ENCODE measurements at regions of chr2 and their contacts with region 1.

Region 1: GRCh38 chr2:197710424-197711042 is 5.4 kb downstream of the MARS2 start:
- DNase-seq: no peak
- H3K4me3 ChIP-seq: no peak overlapping the region
- H3K27ac ChIP-seq: no peak overlapping the region
- H3K4me1 ChIP-seq: peaks cover 21 to 48% (median 25%) of the 10 kb centered on the region in 3 donors
- H3K27me3 ChIP-seq: no peaks in the 10 kb centered on the region
- CTCF ChIP-seq: no peak
- POLR2A ChIP-seq: no peak

Region 2: GRCh38 chr2:197306696-197307040 is 403.9 kb before region 1 on chr2:
- intact Hi-C with region 1: no loop called
- DNase-seq: no peak
- H3K4me3 ChIP-seq: no peak overlapping the region
- H3K27ac ChIP-seq: peak overlapping the region in 3 of 4 donors; percentile 53 to 89 (median 68)
- H3K4me1 ChIP-seq: peaks cover 0 to 71% (median 13%) of the 10 kb centered on the region in 3 donors
- H3K27me3 ChIP-seq: no peaks in the 10 kb centered on the region
- CTCF ChIP-seq: no peak
- POLR2A ChIP-seq: peak in 1 of 4 donors; percentile 8

Region 3: DNA sequence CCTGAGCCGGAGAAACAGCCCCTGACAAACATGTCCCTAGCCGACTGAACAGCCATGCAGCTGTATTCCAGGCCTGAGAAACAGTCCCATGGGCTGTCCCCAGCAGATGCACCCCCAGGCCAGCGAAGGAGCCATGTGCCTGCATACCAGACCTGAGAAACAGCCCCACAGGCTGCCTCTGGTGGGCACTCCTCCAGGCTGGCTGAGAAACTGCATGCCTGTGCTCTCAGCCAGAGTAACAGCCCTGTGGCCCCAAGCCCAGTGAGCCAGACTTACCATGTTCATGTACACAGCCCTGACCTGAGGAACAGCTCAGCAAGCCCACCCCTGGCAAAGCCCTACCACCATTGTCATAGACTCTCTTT is 49.7 kb after region 1 on chr2:
- intact Hi-C with region 1: loop called (anchors 10 kb)
- DNase-seq: no peak
- H3K4me3 ChIP-seq: no peak overlapping the region
- H3K27ac ChIP-seq: no peak overlapping the region
- H3K4me1 ChIP-seq: no peaks in the 10 kb centered on the region
- H3K27me3 ChIP-seq: no peaks in the 10 kb centered on the region
- CTCF ChIP-seq: no peak
- POLR2A ChIP-seq: no peak

Region 4: GRCh38 chr2:197799068-197799467 is 88.5 kb after region 1 on chr2:
- intact Hi-C with region 1: no loop called
- DNase-seq: no peak
- H3K4me3 ChIP-seq: no peak overlapping the region
- H3K27ac ChIP-seq: no peak overlapping the region
- H3K4me1 ChIP-seq: peaks cover 9 to 11% (median 9%) of the 10 kb centered on the region in 3 donors
- H3K27me3 ChIP-seq: peaks cover 0 to 13% (median 0%) of the 10 kb centered on the region in 4 donors
- CTCF ChIP-seq: no peak
- POLR2A ChIP-seq: no peak

Region 5: GRCh38 chr2:198173242-198173641 is 462.7 kb after region 1 on chr2:
- intact Hi-C with region 1: no loop called
- DNase-seq: no peak
- H3K4me3 ChIP-seq: no peak overlapping the region
- H3K27ac ChIP-seq: no peak overlapping the region
- H3K4me1 ChIP-seq: no peaks in the 10 kb centered on the region
- H3K27me3 ChIP-seq: no peaks in the 10 kb centered on the region
- CTCF ChIP-seq: no peak
- POLR2A ChIP-seq: no peak